ENCODE measurements at regions of chr5 and their contacts with region 1.

Region 1: DNA sequence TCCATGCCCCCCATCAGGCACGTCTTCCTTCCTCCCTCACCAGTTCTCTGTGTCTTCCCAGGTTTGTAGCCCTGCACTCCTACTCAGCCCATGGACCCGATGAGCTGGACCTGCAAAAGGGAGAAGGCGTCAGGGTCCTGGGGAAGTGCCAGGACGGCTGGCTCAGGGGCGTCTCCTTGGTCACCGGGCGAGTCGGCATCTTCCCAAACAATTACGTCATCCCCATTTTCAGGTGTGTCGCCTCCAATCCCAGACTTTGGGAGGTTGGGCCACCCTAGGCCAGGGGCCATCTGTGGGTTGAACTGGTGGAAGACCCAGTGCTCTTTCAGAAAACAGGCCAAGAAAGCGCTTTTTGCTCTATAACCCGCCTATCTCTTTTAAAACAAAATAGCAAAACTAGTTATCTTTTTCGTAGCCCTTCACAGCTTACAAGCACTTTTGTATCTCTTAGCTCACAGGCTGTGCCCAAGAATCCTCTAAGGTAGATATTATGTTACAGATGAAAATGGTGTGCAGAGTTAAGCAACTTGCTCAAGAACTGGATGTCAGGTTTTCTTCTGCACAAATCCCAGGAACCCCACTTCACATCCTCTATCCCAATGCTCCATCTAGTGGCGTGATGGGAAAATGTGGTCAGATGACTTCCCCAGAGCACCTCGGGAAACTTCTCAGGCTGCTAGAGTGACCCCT is 56.2 kb downstream of the PLAC8L1 start:
- DNase-seq: peak in 1 of 2 experiments; percentile 76
- H3K4me3 ChIP-seq: no peak overlapping the region
- H3K27ac ChIP-seq: no peak overlapping the region
- H3K4me1 ChIP-seq: no peaks in the 10 kb centered on the region; a peak in 1 of 7 replicates
- H3K27me3 ChIP-seq: no peaks in the 10 kb centered on the region
- CTCF ChIP-seq: peak; percentile 66 to 88 (median 87)
- EP300 ChIP-seq: no peak
- POLR2A ChIP-seq: no peak
- RAD21 ChIP-seq: peak; percentile 96 to 98

Region 2: DNA sequence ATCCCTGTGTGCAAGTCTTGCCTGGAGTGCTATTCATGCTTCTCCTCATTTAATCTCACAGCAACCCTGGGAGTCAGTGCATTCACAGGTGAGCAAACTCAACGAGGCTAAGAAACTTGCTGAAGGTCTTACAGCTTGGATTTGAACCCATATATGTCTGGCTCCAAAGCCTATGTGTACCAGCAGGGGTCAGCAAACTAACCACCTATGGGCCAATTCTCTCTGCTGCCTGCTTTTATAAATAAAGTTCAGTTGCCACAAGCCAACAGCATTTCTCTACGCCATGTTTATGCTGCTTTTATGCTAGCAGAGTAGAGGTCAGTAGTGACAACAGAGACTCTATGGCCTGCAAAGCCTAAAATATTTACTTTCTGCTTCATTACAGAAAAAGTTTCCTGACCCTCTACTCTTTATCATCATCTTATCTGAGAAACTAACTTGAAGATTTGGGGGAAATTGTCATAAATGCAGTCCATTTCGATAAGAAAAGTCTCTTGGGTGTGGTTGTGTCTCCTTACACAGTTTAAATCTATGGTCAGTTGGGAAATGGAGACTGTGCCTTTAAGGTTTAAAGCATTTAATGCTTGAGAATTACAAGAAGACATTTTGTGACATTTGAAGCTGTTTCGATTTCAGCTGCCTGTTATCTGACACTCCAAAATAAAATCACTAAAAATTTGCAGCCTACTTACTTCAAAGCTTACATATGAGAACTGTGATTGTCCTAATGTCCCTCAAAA is 351.7 kb before region 1 on chr5:
- CTCF ChIA-PET with region 1: interaction called, 21 read pairs
- POLR2A ChIA-PET with region 1: no interaction called
- DNase-seq: no peak
- H3K4me3 ChIP-seq: no peak overlapping the region
- H3K27ac ChIP-seq: no peak overlapping the region
- H3K4me1 ChIP-seq: no peaks in the 10 kb centered on the region
- H3K27me3 ChIP-seq: no peaks in the 10 kb centered on the region
- CTCF ChIP-seq: peak in 2 of 3 experiments; percentile 70; a peak in 3 of 4 replicates
- EP300 ChIP-seq: no peak
- POLR2A ChIP-seq: no peak
- RAD21 ChIP-seq: peak; percentile 56 to 68

Region 3: GRCh38 chr5:145825751-145826180 is 223.4 kb before region 1 on chr5:
- CTCF ChIA-PET with region 1: interaction called, 20 read pairs
- POLR2A ChIA-PET with region 1: no interaction called
- DNase-seq: no peak
- H3K4me3 ChIP-seq: no peak overlapping the region
- H3K27ac ChIP-seq: no peak overlapping the region
- H3K4me1 ChIP-seq: no peaks in the 10 kb centered on the region
- H3K27me3 ChIP-seq: no peaks in the 10 kb centered on the region; a peak in 1 of 7 replicates
- CTCF ChIP-seq: peak in 2 of 3 experiments; percentile 65 to 89; a peak in 3 of 4 replicates
- EP300 ChIP-seq: no peak
- POLR2A ChIP-seq: no peak
- RAD21 ChIP-seq: peak; percentile 67 to 72

Region 4: GRCh38 chr5:145887976-145888574 is 161.1 kb before region 1 on chr5:
- CTCF ChIA-PET with region 1: interaction called, 36 read pairs
- POLR2A ChIA-PET with region 1: no interaction called
- DNase-seq: peak; percentile 21 to 61
- H3K4me3 ChIP-seq: no peak overlapping the region
- H3K27ac ChIP-seq: no peak overlapping the region
- H3K4me1 ChIP-seq: peaks cover 0 to 2% (median 0%) of the 10 kb centered on the region in 4 experiments; a peak in 1 of 7 replicates
- H3K27me3 ChIP-seq: no peaks in the 10 kb centered on the region
- CTCF ChIP-seq: peak; percentile 58 to 93 (median 73)
- EP300 ChIP-seq: no peak
- POLR2A ChIP-seq: no peak
- RAD21 ChIP-seq: peak; percentile 64 to 68

Region 5: DNA sequence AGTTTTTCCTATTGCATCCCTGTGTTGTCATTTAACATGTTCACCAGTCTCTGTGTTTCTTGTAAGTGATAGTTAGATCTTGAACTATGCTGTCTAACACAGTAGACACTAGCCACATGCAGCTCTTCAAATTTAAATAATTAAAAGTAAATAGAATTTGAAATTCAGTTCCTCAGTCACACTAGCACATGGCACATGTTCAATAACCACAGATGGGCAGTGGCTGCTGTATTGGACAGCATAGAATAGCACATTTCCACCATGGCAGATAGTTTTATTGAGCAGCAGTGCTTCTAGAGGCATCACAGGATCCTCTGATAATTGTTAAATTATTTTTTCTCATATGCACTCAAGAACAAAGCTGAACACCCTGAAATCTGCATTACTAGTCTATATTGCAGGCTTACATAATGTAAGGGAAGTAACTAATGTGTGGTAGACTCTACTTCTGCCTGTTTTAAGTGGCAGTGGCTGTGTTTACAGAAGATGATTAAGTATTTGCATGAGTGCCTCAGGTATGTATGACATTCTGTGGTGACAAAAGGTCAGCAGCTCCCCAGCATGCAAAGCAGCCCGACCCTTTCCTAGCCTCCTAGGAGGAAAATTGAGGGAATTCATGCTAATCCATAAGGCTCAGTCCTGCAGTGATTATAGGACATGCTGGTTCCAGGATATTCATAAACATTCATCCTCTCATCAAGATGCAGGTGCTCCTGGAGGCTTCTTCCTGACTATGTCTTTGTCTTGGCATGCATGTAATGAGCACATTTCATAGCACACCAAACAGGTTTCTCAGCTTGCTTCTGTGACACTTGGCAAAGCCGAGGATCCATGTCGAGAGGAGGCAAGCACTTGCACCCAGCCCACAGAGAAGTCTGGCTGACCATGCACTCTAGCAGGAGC is 67.3 kb before region 1 on chr5:
- CTCF ChIA-PET with region 1: interaction called, 20 read pairs
- POLR2A ChIA-PET with region 1: no interaction called
- DNase-seq: no peak
- H3K4me3 ChIP-seq: no peak overlapping the region
- H3K27ac ChIP-seq: no peak overlapping the region
- H3K4me1 ChIP-seq: peaks cover 0 to 7% (median 3%) of the 10 kb centered on the region in 4 experiments; a peak in 2 of 7 replicates
- H3K27me3 ChIP-seq: no peaks in the 10 kb centered on the region
- CTCF ChIP-seq: no peak
- EP300 ChIP-seq: no peak
- POLR2A ChIP-seq: no peak
- RAD21 ChIP-seq: no peak

Region 6: DNA sequence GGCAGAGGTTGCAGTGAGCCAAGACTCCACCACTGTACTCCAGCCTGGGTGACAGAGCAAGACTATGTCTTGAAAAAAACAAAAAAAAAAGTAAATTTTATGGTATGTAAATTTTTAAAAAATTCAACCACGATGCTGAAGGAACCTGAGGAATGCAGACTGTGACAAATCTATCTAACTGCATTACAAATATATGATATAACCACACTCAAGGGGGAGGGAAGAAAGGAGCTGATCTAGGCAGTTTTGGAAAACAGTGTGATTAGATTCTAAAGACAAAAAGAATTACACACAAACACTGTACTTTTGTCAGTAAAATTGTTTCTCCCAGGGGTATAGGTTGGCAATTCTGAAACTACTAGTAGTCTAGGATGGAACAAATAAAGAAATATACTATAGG is 116.3 kb after region 1 on chr5:
- CTCF ChIA-PET with region 1: no interaction called
- POLR2A ChIA-PET with region 1: no interaction called
- DNase-seq: no peak
- H3K4me3 ChIP-seq: no peak overlapping the region
- H3K27ac ChIP-seq: no peak overlapping the region
- H3K4me1 ChIP-seq: no peaks in the 10 kb centered on the region
- H3K27me3 ChIP-seq: no peaks in the 10 kb centered on the region
- CTCF ChIP-seq: no peak
- EP300 ChIP-seq: no peak
- POLR2A ChIP-seq: no peak
- RAD21 ChIP-seq: no peak

Measured in H1 (cell line).